ENCODE measurements at regions of chr15 and their contacts with region 1.

Region 1: DNA sequence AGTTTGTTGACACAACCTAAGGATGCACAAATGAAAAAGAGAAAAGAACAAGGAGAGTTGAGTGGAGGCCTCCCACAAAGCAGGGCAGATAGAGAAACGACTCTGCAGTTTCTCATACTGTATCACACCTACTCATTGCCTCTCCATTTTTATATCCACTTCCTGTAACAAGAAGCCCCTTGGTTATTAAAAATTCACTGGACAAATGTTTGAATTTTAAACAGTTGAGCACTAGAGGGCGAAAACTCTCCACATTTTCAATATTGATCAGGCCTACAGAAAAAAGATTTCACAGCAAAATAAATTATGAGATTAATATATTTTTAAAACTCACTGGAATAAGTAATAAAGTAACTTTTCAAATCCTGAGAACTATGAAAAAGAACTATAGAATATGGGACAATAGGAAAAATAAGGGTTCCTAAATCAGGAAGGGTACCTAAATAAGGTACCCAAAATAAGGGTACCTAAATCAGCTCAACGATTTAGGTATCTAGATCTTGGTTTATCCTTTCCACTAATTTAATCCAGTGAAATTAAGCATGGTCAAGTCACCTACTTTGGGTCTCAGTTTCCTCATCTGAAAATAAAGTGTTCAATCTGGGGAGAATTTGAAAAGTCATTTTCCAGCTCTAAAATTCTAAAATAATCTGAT is 47.0 kb upstream of the PPIB start:
- DNase-seq: no peak
- ATAC-seq: peak; percentile 61

Region 2: GRCh38 chr15:64355944-64356709 is 146.3 kb after region 1 on chr15 and contains the start of gene CSNK1G1:
- intact Hi-C with region 1: loop called in 1 of 2 experiments (anchors 10 kb)
- DNase-seq: peak; percentile 95
- ATAC-seq: peak; percentile 97
- total RNA-seq, gene CSNK1G1: 19.9 to 20.4 TPM

Region 3: GRCh38 chr15:64997745-64998375 is 788.1 kb after region 1 on chr15:
- intact Hi-C with region 1: no loop called
- DNase-seq: no peak
- ATAC-seq: no peak

Measured in left colon (tissue), 2 donors.